Left cardiac atrium (tissue), 4 donors: ENCODE measurements at regions of chr20 and their contacts with region 1.

Region 1: GRCh38 chr20:31851240-31851955 is 6.0 kb upstream of the FOXS1 start:
- DNase-seq: no peak
- ATAC-seq: no peak

Region 2: GRCh38 chr20:31781945-31782344 is 69.5 kb before region 1 on chr20:
- intact Hi-C with region 1: no loop called
- DNase-seq: no peak
- ATAC-seq: no peak

Region 3: GRCh38 chr20:31951530-31952453 is 100.4 kb after region 1 on chr20 and contains the start of gene PDRG1:
- intact Hi-C with region 1: loop called (anchors 2 to 5 kb)
- DNase-seq: peak; percentile 97
- ATAC-seq: peak; percentile 98 to 99
- total RNA-seq, gene PDRG1: 8.8 to 9.6 TPM

Region 4: GRCh38 chr20:32091888-32092346 is 240.5 kb after region 1 on chr20:
- intact Hi-C with region 1: loop called in 1 of 2 experiments (anchors 2 kb)
- DNase-seq: peak; percentile 78
- ATAC-seq: peak; percentile 47 to 80

Region 5: DNA sequence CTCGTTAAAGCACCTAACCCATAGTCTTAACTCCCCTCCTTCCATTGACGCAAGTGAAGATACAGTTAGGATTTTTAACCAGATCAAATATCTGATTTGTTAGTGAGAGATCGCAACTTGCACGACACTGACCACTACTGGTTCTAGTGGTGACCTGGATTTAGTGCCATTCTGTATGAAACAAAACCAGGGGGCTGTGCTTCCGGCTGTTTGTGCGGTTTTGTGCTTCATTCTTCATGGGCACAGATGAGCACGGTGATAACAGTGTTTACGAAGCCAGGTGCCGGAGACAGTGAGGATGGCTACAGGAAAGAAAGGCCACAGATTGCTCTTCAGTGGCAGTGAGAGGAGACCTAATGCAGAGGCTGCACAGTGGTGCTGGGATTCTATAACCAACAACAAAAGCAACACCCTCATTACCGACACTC is 658.3 kb after region 1 on chr20:
- intact Hi-C with region 1: no loop called
- DNase-seq: no peak
- ATAC-seq: no peak